MCF 10A (cell line): ENCODE measurements at regions of chr1 and their contacts with region 1.

Region 1: GRCh38 chr1:200620273-200621131 is at the start of gene KIF14:
- DNase-seq: peak; percentile 99
- H3K4me3 Mint-ChIP-seq: peak within 1 kb of the TSS; percentile 96
- H3K27ac Mint-ChIP-seq: peak within 1 kb of the TSS; percentile 97
- H3K4me1 Mint-ChIP-seq: peaks cover 48% of the 10 kb centered on the region
- H3K27me3 Mint-ChIP-seq: no peaks in the 10 kb centered on the region
- CTCF ChIP-seq: no peak
- total RNA-seq, gene KIF14: 13.4 and 25.5 TPM in 2 replicates

Region 2: GRCh38 chr1:200379431-200379755 is 241.1 kb before region 1 on chr1:
- CTCF ChIA-PET with region 1: no interaction called
- POLR2A ChIA-PET with region 1: no interaction called
- intact Hi-C with region 1: no loop called
- DNase-seq: peak; percentile 97
- H3K4me3 Mint-ChIP-seq: peak overlapping the region; percentile 61
- H3K27ac Mint-ChIP-seq: peak overlapping the region; percentile 71
- H3K4me1 Mint-ChIP-seq: peaks cover 56% of the 10 kb centered on the region
- H3K27me3 Mint-ChIP-seq: no peaks in the 10 kb centered on the region
- CTCF ChIP-seq: no peak

Region 3: GRCh38 chr1:200526709-200527612 is 93.5 kb before region 1 on chr1:
- CTCF ChIA-PET with region 1: no interaction called
- POLR2A ChIA-PET with region 1: no interaction called
- intact Hi-C with region 1: no loop called
- DNase-seq: no peak
- H3K4me3 Mint-ChIP-seq: no peak overlapping the region
- H3K27ac Mint-ChIP-seq: no peak overlapping the region
- H3K4me1 Mint-ChIP-seq: no peaks in the 10 kb centered on the region
- H3K27me3 Mint-ChIP-seq: no peaks in the 10 kb centered on the region
- CTCF ChIP-seq: no peak

Region 4: DNA sequence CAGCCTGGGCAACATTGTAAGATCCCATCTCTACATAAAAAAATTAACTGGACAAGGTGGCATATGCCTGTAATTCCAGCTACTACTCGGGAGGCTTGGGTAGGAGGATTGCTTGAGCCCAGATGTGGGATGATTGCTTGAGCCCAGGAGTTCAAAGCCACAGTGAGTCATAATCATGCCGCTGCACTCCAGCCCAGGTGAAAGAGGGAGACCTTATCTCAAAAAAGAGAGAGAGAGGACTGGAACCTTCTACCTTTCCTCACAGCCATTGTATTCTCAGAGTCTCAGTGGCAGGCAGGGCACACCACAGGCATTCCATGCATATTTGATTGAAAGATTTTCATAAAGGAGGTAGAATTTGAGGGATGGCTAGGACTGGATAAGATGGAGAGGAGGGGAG is 78.3 kb before region 1 on chr1:
- CTCF ChIA-PET with region 1: no interaction called
- POLR2A ChIA-PET with region 1: no interaction called
- intact Hi-C with region 1: no loop called
- DNase-seq: no peak
- H3K4me3 Mint-ChIP-seq: no peak overlapping the region
- H3K27ac Mint-ChIP-seq: no peak overlapping the region
- H3K4me1 Mint-ChIP-seq: peaks cover 6% of the 10 kb centered on the region
- H3K27me3 Mint-ChIP-seq: no peaks in the 10 kb centered on the region
- CTCF ChIP-seq: no peak

Region 5: GRCh38 chr1:200634261-200635122 is 14.0 kb after region 1 on chr1:
- CTCF ChIA-PET with region 1: interaction called, 20 read pairs
- POLR2A ChIA-PET with region 1: interaction called, 28 read pairs
- intact Hi-C with region 1: no loop called
- DNase-seq: peak; percentile 43
- H3K4me3 Mint-ChIP-seq: no peak overlapping the region
- H3K27ac Mint-ChIP-seq: no peak overlapping the region
- H3K4me1 Mint-ChIP-seq: no peaks in the 10 kb centered on the region
- H3K27me3 Mint-ChIP-seq: no peaks in the 10 kb centered on the region
- CTCF ChIP-seq: peak; percentile 41

Region 6: DNA sequence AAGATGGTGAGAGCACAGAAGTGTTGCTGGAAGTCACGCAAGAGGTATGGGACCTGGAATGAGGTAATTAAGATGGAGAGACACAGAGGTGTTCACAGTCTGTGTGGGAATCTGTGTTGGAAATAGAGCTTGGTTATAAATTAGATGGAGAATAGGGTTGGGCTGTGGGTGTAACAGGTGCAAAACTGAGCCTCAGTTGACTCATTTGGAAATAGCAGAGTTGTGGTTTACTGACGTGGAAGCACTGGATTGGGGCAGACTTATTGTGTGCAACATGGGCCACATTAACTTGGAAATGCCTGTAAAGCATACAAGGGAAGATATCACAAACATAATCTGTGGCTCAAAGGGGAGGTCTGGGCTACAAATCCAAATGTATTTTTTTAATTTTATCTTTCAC is 131.2 kb after region 1 on chr1:
- CTCF ChIA-PET with region 1: interaction called, 7 read pairs
- POLR2A ChIA-PET with region 1: interaction called, 10 read pairs
- intact Hi-C with region 1: no loop called
- DNase-seq: no peak
- H3K4me3 Mint-ChIP-seq: no peak overlapping the region
- H3K27ac Mint-ChIP-seq: no peak overlapping the region
- H3K4me1 Mint-ChIP-seq: peaks cover 52% of the 10 kb centered on the region
- H3K27me3 Mint-ChIP-seq: no peaks in the 10 kb centered on the region
- CTCF ChIP-seq: no peak

Region 7: GRCh38 chr1:200802865-200803512 is 182.5 kb after region 1 on chr1:
- CTCF ChIA-PET with region 1: interaction called, 108 read pairs
- POLR2A ChIA-PET with region 1: interaction called, 59 read pairs
- intact Hi-C with region 1: loop called (anchors 1 kb)
- DNase-seq: peak; percentile 93
- H3K4me3 Mint-ChIP-seq: no peak overlapping the region
- H3K27ac Mint-ChIP-seq: no peak overlapping the region
- H3K4me1 Mint-ChIP-seq: peaks cover 32% of the 10 kb centered on the region
- H3K27me3 Mint-ChIP-seq: no peaks in the 10 kb centered on the region
- CTCF ChIP-seq: peak; percentile 99

Region 8: DNA sequence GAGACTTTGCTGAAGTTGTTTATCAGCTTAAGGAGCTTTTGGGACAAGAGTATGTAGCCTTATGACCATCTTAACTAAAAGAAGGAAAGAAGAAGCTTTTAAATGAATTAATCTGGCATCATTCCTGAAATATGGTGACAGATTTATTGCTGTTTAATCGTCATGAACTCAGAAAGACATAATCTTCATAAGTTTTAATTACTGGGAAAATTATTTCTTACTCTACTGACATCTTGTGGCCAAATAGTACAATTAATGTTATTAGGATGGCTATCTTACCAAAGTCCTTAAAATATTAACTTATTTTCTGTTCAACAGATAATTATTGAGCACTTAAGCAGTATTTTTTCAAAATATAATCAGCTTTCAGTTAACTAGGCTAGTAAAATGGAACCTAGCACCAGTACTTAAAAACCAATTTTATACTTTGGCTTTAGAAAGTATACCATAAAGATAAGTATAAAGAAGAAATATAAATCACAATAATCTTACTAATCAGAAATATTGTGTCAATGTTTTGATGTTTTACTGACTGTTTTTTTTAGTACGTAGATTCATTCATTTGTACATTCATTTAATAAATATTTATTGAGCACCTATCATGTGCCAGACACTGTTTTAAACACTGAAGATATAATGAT is 217.5 kb after region 1 on chr1:
- CTCF ChIA-PET with region 1: interaction called, 84 read pairs
- POLR2A ChIA-PET with region 1: interaction called, 14 read pairs
- intact Hi-C with region 1: loop called (anchors 1 kb)
- DNase-seq: peak; percentile 45
- H3K4me3 Mint-ChIP-seq: no peak overlapping the region
- H3K27ac Mint-ChIP-seq: no peak overlapping the region
- H3K4me1 Mint-ChIP-seq: peaks cover 16% of the 10 kb centered on the region
- H3K27me3 Mint-ChIP-seq: no peaks in the 10 kb centered on the region
- CTCF ChIP-seq: peak; percentile 67

Region 9: DNA sequence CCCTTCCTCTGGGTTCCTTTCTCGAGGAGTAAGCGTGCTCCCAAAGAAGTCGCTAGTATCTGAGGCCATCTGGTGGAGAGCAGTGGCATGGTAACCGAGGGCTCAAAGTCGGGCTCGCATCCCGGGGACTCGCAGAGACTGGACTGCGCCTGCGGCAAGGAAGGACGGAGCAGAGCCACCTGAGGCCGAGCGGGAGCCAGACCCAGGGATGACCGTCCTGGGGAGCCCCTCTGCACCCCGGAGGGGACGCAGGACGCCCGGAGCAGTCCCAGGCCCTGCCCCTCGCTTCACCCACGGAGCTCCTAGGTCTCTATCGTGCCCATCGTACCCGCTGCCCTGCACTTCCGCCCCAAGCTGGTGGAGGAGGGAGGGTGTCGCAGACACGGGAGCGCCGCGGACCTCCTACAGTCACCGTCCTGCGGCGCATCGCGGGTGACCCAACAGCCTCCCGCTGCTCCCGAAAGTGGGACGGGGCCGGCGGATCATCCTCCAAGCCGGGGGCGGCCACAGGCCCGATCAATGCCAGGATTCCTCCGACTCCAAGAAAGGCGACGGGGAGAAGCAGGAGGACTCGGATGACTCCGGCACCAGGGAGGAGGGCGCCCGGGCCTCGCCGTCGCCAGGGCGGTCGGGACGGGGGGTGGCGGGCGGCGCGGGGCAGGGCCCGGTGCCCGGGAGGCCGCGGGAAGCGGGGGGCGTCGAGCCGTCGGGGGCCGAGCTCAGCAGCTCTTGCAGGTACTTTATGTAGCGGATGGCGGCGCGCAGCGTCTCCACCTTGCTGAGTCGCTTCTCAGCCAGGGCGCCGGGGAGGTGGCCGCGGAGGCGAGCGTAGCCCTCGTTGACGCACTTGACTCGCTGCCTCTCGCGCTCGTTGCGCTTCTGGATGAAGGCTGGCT is 494.0 kb after region 1 on chr1:
- CTCF ChIA-PET with region 1: interaction called, 3 read pairs
- POLR2A ChIA-PET with region 1: interaction called, 3 read pairs
- intact Hi-C with region 1: loop called (anchors 1 kb)
- DNase-seq: peak; percentile 98
- H3K4me3 Mint-ChIP-seq: peak overlapping the region; percentile 78
- H3K27ac Mint-ChIP-seq: peak overlapping the region; percentile 55
- H3K4me1 Mint-ChIP-seq: no peaks in the 10 kb centered on the region
- H3K27me3 Mint-ChIP-seq: no peaks in the 10 kb centered on the region
- CTCF ChIP-seq: peak; percentile 98